Heart right ventricle (tissue), 16 donors: ENCODE measurements at regions of chr9 and their contacts with region 1.

Region 1: DNA sequence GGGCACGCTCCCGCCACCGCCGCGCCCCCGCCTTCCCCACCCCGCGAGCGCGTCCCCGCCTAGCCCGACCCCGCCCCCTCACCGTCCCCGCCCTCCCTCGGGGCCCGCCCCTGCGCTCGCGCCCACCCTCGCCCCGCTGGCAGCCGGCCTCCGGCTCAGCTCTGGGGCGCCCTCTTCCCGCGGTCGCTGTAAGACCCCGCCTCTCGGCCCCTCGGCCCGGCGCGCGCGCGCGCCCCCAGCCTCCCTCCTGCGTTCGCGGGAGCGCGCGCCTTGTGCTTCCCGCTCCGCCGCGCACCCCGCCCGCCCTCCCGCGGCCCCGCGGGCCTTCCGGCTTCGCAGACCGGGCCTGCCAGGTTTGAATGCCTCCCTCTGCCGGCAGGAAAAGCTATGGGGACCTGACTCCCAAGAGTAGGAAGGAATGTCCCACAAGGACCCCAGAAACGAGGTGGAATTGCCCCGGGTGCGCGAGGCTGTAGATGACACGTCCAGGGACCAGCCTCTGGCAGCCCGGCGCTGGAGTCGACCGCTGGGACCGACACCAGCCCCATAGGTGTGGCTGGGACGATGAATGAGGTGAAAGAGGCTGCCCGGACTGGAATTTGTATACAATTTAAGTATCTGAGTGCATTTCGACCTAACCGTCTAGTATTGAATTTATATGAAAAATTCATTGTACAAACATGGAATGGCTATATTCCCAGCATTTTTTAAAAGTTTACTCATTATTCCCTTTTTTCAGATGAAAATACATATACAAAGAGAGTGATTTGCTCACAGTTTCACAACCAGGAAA is 416 bp upstream of the PTBP3 start:
- DNase-seq: peak; percentile 94 to 97
- ATAC-seq: peak; percentile 94 to 98 (median 97)
- H3K4me3 ChIP-seq: peak overlapping the region; percentile 72 to 99 (median 90)
- H3K27ac ChIP-seq: peak overlapping the region; percentile 98 to 100 (median 99)
- H3K4me1 ChIP-seq: peaks cover 0 to 38% (median 17%) of the 10 kb centered on the region in 9 donors
- H3K27me3 ChIP-seq: no peaks in the 10 kb centered on the region
- CTCF ChIP-seq: peak; percentile 35 to 75 (median 59)

Region 2: GRCh38 chr9:111896353-111896958 is 437.4 kb before region 1 on chr9 and contains the start of gene UGCG:
- intact Hi-C with region 1: loop called in 4 of 10 experiments (anchors 2 to 10 kb)
- DNase-seq: peak; percentile 85 to 92
- ATAC-seq: peak; percentile 97 to 100 (median 98)
- H3K4me3 ChIP-seq: peak within 1 kb of the TSS; percentile 72 to 95 (median 82)
- H3K27ac ChIP-seq: peak within 1 kb of the TSS; percentile 79 to 98 (median 95)
- H3K4me1 ChIP-seq: peaks cover 0 to 49% (median 39%) of the 10 kb centered on the region in 9 donors
- H3K27me3 ChIP-seq: no peaks in the 10 kb centered on the region
- CTCF ChIP-seq: no peak
- total RNA-seq, gene UGCG: 11.1 to 42.6 (median 13.6) TPM

Region 3: DNA sequence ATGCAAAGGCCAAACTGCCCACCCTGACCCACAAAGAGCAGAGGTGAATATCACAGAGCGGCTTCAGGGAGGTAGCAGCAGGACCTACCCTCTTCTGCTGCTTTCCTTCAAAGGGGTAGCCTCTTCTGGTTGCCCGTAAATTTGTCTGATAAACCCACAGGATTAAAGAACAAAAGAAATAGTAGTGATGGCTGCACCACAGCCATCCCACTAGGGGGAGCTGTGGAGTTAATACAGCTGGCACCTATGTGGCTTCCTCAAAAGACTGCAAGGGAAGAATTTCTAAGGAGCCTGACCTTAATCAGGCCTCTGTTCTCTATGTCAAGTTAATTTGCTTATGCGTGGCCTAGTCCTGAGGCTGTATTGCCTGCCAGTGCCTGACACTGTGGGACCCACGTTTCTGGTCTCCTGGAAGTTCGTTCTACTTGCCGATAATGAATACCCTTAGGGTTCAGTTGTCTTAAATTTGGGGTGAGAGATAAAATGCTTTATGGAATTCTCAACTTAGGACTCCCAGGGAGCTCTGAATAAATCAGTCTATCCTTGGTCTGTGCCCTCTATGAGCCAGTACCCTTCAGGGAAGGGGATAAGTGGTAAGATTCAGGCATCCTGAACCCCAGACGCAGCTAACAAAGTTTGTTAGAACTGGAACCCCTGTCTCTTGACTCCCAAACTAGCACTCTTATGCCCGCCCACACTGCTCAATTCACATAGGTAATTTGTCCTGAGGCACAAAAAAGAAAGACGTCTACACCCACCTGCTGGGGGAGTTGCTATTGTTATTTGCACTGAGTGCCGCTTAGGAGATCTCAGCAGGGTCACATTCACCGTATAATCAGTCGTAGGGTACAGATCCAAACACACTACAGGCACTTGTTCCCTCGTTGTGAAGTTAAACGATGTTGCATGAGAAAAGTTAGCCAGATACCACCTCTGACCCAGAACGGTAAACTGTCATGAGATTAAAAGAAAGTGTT is 235.8 kb before region 1 on chr9:
- intact Hi-C with region 1: loop called in 4 of 10 experiments (anchors 5 kb)
- DNase-seq: peak; percentile 32 to 54
- ATAC-seq: peak in 7 of 8 donors; percentile 78 to 88 (median 86)
- H3K4me3 ChIP-seq: no peak overlapping the region
- H3K27ac ChIP-seq: no peak overlapping the region
- H3K4me1 ChIP-seq: peaks cover 0 to 48% (median 0%) of the 10 kb centered on the region in 9 donors
- H3K27me3 ChIP-seq: no peaks in the 10 kb centered on the region
- CTCF ChIP-seq: peak; percentile 76 to 94 (median 88)

Region 4: GRCh38 chr9:112104901-112105300 is 228.9 kb before region 1 on chr9:
- intact Hi-C with region 1: loop called in 1 of 10 experiments (anchors 5 kb)
- DNase-seq: no peak
- ATAC-seq: no peak
- H3K4me3 ChIP-seq: no peak overlapping the region
- H3K27ac ChIP-seq: peak overlapping the region in 1 of 10 donors; percentile 79
- H3K4me1 ChIP-seq: peaks cover 0 to 41% (median 0%) of the 10 kb centered on the region in 9 donors
- H3K27me3 ChIP-seq: no peaks in the 10 kb centered on the region
- CTCF ChIP-seq: no peak

Region 5: DNA sequence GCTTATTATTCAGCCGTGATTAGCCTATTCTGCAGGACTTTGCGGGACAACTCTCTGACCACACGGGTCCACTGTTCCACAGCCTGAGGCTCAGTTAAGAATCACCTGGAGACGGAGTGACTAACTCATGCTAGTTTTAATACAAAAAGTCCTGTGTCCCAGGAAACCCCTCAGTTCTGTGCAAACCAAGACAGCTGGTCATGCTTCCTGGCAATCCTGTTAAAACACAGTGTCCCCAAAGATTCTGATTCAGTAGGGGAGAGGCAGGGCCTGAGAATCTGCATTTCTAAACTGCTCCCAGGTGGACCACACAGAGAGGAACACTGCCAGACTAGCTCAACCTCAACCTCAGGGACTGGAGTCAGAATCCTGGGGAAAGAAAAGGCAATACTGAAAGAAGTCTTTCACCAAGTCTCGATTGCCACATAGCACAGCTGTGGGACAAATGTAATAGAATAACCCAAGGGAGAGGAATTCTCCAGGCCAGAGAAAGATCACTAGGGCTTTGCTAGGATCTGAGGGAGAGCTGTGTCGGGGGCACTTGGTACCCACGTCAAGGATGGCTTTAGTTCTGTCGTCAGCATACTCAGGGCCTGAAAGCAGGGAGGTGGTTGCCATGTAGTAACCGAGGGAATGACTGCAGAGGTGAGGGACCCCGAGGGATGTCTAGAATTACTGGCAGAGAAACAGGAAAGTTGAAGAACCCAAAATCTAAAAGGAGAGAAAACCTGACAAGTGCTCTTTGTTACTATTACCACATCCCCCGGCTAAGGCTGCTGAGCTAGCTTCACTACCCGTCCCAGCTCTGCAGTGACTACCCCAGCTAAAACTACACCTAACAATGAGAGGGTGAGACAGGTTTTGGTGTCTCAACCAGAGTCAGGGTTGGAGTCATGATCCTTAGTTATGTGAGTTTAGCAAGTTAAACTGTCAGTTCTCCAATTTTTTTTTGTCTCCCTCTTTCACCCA is 167.4 kb before region 1 on chr9:
- intact Hi-C with region 1: loop called in 4 of 10 experiments (anchors 5 to 10 kb)
- DNase-seq: no peak
- ATAC-seq: peak; percentile 60 to 92 (median 74)
- H3K4me3 ChIP-seq: no peak overlapping the region
- H3K27ac ChIP-seq: peak overlapping the region in 3 of 10 donors; percentile 26 to 41 (median 26)
- H3K4me1 ChIP-seq: peaks cover 0 to 37% (median 0%) of the 10 kb centered on the region in 9 donors
- H3K27me3 ChIP-seq: no peaks in the 10 kb centered on the region
- CTCF ChIP-seq: peak in 3 of 9 donors; percentile 20 to 37 (median 33)

Region 6: GRCh38 chr9:112174218-112174964 is 159.4 kb before region 1 on chr9:
- intact Hi-C with region 1: loop called in 4 of 10 experiments (anchors 5 to 10 kb)
- DNase-seq: peak; percentile 48 to 77
- ATAC-seq: peak; percentile 75 to 92 (median 86)
- H3K4me3 ChIP-seq: peak overlapping the region; percentile 35 to 81 (median 69)
- H3K27ac ChIP-seq: peak overlapping the region; percentile 32 to 91 (median 74)
- H3K4me1 ChIP-seq: peaks cover 0 to 50% (median 3%) of the 10 kb centered on the region in 9 donors
- H3K27me3 ChIP-seq: no peaks in the 10 kb centered on the region
- CTCF ChIP-seq: no peak

Region 7: DNA sequence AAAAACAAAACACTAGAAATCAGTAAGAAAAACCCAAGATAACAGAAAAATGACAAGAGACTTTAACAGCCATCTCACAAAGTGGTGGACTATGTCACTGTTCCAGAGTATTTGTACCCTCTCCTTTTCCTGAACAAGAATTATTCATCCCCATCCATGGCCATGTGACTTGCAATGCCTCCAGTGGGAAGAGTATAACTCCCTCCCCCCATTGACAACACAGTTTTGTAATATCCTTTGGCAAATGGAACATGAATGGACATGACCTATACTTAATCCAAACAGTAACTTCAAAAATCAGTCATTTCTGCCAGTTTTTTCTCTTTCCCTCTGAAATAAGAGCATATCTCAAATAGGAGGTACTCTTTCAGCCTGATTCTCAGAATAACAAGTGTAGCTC is 34.3 kb before region 1 on chr9:
- intact Hi-C with region 1: no loop called
- DNase-seq: no peak
- ATAC-seq: peak in 3 of 8 donors; percentile 46 to 85 (median 70)
- H3K4me3 ChIP-seq: no peak overlapping the region
- H3K27ac ChIP-seq: peak overlapping the region in 1 of 10 donors; percentile 31
- H3K4me1 ChIP-seq: peaks cover 0 to 23% (median 8%) of the 10 kb centered on the region in 9 donors
- H3K27me3 ChIP-seq: no peaks in the 10 kb centered on the region
- CTCF ChIP-seq: no peak